ENCODE measurements at regions of chr1 and their contacts with region 1.

Region 1: GRCh38 chr1:244209955-244210354 is 158.9 kb downstream of the ZBTB18 start:
- DNase-seq: no peak
- H3K4me3 ChIP-seq: no peak overlapping the region
- H3K27ac ChIP-seq: no peak overlapping the region
- H3K4me1 ChIP-seq: no peaks in the 10 kb centered on the region
- H3K27me3 ChIP-seq: no peaks in the 10 kb centered on the region
- CTCF ChIP-seq: no peak

Region 2: DNA sequence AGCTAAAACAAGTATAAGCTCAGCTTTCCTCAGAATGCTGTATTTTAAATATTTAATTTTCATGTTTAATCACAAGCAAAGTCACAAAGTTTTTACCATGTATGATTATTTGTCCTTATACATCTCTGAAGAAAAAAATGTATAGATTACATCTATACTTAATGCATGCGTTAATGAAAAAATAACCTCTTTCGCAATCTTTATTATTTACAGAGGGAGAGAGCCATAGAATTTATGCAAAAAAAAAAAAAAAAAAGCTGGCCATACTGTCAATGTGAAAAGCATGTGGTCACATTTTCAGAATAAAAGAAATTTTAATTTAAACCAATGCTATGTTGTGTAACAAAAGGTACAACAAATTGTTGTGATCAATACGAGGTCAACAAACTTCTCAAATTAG is 508.1 kb before region 1 on chr1:
- CTCF ChIA-PET with region 1: no interaction called
- POLR2A ChIA-PET with region 1: interaction called, 23 read pairs
- intact Hi-C with region 1: no loop called
- DNase-seq: no peak
- H3K4me3 ChIP-seq: no peak overlapping the region
- H3K27ac ChIP-seq: no peak overlapping the region
- H3K4me1 ChIP-seq: no peaks in the 10 kb centered on the region
- H3K27me3 ChIP-seq: no peaks in the 10 kb centered on the region
- CTCF ChIP-seq: no peak

Region 3: GRCh38 chr1:244552340-244552739 is 342.4 kb after region 1 on chr1:
- CTCF ChIA-PET with region 1: no interaction called
- POLR2A ChIA-PET with region 1: no interaction called
- intact Hi-C with region 1: no loop called
- DNase-seq: no peak
- H3K4me3 ChIP-seq: no peak overlapping the region
- H3K27ac ChIP-seq: no peak overlapping the region
- H3K4me1 ChIP-seq: no peaks in the 10 kb centered on the region
- H3K27me3 ChIP-seq: no peaks in the 10 kb centered on the region
- CTCF ChIP-seq: no peak

Measured in A673 (cell line).